Mucosa of descending colon (tissue), 3 donors: ENCODE measurements at regions of chr7 and their contacts with region 1.

Region 1: GRCh38 chr7:100049441-100050311 is at the start of gene ZSCAN21:
- DNase-seq: peak; percentile 89 to 90 (median 89)
- ATAC-seq: peak; percentile 91
- H3K4me3 ChIP-seq: peak within 1 kb of the TSS; percentile 65
- H3K4me1 ChIP-seq: peaks cover 17% of the 10 kb centered on the region
- CTCF ChIP-seq: no peak
- total RNA-seq, gene ZSCAN21: 6.9 to 13.9 (median 7.7) TPM

Region 2: DNA sequence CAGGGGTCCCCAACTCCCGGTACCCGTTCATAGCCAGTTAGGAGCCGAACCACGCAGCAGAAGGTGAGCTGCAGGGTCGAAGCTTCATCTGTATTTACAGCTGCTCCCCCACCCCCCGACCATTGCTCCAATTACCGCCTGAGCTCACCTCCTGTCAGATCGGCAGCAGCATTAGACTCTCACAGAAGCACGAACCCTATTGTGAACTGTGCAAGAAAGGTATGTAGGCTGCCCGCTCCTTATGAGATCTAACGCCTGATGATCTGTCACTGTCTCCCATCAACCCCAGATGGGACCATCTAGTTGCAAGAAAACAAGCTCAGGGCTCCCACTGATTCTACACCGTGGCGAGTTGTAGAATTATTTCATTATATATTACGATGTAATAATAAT is 59.2 kb before region 1 on chr7:
- intact Hi-C with region 1: loop called (anchors 5 to 10 kb)
- DNase-seq: no peak
- ATAC-seq: no peak
- H3K4me3 ChIP-seq: no peak overlapping the region
- H3K4me1 ChIP-seq: peaks cover 10% of the 10 kb centered on the region
- CTCF ChIP-seq: no peak

Region 3: GRCh38 chr7:99997545-99998137 is 52.0 kb before region 1 on chr7:
- intact Hi-C with region 1: loop called (anchors 5 to 10 kb)
- DNase-seq: peak; percentile 70 to 80 (median 80)
- ATAC-seq: peak; percentile 85
- H3K4me3 ChIP-seq: peak overlapping the region; percentile 18
- H3K4me1 ChIP-seq: peaks cover 5% of the 10 kb centered on the region
- CTCF ChIP-seq: no peak